ENCODE measurements at regions of chr1 and their contacts with region 1.

Region 1: GRCh38 chr1:227482023-227482299 is 81.4 kb upstream of the ZNF678 start:
- DNase-seq: no peak
- H3K4me3 ChIP-seq: no peak overlapping the region
- H3K27me3 ChIP-seq: no peaks in the 10 kb centered on the region
- CTCF ChIP-seq: no peak

Region 2: GRCh38 chr1:227466039-227466645 is 15.8 kb before region 1 on chr1:
- CTCF ChIA-PET with region 1: interaction called, 13 read pairs
- POLR2A ChIA-PET with region 1: no interaction called
- DNase-seq: no peak
- H3K4me3 ChIP-seq: no peak overlapping the region
- H3K27me3 ChIP-seq: peaks cover 6% of the 10 kb centered on the region
- CTCF ChIP-seq: no peak

Region 3: DNA sequence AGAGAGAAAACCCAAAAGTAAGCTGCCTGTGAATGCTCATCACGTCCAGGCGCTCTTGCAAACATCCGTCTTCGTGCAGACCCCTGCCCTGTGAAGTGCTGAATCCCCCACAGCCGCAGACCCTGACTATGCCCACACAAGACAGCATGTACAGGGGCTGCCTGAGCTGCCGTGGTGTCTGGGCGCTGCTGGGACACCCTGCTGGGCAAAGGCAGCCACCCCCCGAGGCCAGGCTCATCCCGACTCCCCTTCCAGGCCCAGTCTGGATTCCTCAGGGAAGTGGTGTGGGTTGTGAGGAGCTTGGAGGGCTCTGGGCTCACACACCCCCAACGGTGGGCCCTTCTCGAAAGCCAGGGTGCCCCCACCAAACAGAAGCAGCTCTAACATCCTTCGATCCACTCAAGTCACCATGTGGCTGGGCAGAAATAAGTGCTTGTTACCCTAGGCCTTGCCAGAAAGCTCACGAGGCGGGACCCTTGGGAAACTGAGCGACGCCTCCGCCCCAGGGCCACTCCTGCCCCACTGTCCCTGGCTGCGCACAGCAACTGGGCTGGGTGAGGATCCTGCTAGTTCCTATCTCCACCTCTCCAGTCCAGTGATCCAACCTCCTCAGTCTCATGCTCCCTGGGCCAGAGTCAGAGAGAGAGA is 470.5 kb after region 1 on chr1:
- CTCF ChIA-PET with region 1: interaction called, 17 read pairs
- POLR2A ChIA-PET with region 1: no interaction called
- DNase-seq: no peak
- H3K4me3 ChIP-seq: no peak overlapping the region
- H3K27me3 ChIP-seq: no peaks in the 10 kb centered on the region
- CTCF ChIP-seq: no peak

Measured in BJ (cell line).